Activated CD4-positive, alpha-beta T cell treated with anti-CD3 and anti-CD28 coated beads, Interleukin-2, amount 10 ng/mL, durations not matched to agents 7 days and 5 days (primary cell): ENCODE measurements at regions of chr1 and their contacts with region 1.

Region 1: DNA sequence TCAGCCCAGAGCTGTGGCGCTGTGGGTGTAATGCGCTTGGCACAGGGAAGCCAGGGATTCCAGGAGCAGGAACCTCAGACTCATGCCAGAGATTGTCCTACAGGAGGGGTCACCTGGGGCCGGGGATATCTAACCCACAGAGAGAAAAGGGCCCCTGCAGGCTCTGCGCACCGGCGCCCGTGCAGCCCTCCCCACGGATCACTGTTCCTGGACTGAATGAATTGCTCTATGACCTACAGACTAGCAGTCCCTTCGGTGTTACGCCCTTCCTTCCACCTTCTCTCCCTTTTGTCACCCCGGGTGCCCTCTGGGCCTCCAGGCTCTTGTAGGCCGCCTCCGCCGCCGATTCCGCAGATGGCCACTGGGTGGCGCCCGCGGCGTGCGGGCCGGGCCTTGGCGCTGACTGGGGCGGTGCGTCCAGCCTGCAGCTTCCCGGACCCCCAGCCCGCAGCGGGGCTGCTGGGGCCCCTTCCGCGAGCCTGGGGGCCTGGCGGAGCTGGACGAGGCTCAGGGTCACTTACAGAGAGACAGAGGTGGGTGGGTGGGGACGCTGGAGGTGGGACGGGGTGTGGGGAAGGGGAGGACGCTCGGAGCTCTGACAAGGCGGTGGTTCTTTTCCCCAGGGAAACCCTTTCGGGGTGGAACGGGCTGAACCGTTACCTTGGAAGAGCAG is 101.3 kb downstream of the IER5 start:
- DNase-seq: peak; percentile 70
- H3K4me3 Mint-ChIP-seq: no peak overlapping the region
- H3K27ac Mint-ChIP-seq: no peak overlapping the region
- H3K4me1 Mint-ChIP-seq: peaks cover 3% of the 10 kb centered on the region
- H3K27me3 Mint-ChIP-seq: peaks cover 15% of the 10 kb centered on the region

Region 2: GRCh38 chr1:181423392-181423837 is 233.6 kb after region 1 on chr1:
- CTCF ChIA-PET with region 1: interaction called, 17 read pairs
- POLR2A ChIA-PET with region 1: interaction called, 3 read pairs
- DNase-seq: peak; percentile 67
- H3K4me3 Mint-ChIP-seq: no peak overlapping the region
- H3K27ac Mint-ChIP-seq: no peak overlapping the region
- H3K4me1 Mint-ChIP-seq: peaks cover 13% of the 10 kb centered on the region
- H3K27me3 Mint-ChIP-seq: peaks cover 21% of the 10 kb centered on the region

Region 3: DNA sequence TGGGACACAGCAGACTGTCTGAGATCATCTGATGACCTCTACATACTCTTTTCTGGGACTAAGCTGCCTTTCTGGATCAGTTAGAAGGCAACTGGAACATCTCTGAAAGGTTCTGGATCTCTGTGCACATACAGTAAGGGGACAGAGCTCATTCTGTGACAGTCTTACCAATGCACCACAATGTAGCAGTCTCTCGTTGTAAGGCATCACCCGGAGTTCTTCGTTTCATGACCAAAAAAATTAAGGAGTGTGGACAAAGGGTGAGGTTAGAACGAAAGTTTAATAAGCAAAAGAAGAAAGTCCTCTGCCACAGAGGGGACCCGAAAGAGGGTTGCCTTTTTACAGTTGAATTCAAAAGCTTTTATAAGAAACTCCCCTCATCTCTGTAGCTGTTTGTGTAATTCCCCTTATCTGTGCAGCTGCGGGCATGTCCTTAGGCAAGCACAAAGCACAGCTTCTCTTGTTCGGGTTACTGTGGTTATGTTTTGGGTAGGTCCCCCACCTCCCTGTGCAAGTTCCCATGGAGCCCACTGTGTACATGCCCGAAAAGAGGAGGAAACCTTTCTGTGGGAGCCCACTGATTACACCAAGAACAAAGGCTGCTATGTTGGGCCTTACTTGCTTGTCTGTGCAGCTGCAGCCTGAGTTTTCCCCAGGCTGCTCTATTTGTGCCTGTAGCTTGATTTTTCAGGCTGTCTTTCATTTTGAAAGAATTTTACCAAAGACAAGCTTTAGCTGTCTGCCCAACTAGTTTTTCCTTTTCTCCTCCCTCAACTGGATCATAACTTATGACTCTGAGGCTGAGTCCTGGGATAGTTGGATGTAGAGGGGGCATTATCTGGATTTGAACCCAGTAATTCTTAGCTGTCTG is 240.4 kb after region 1 on chr1:
- CTCF ChIA-PET with region 1: interaction called, 14 read pairs
- POLR2A ChIA-PET with region 1: no interaction called
- DNase-seq: no peak
- H3K4me3 Mint-ChIP-seq: no peak overlapping the region
- H3K27ac Mint-ChIP-seq: no peak overlapping the region
- H3K4me1 Mint-ChIP-seq: no peaks in the 10 kb centered on the region
- H3K27me3 Mint-ChIP-seq: peaks cover 32% of the 10 kb centered on the region